ENCODE measurements at regions of chr14 and their contacts with region 1.

Region 1: GRCh38 chr14:57486767-57487379 is 6.8 kb downstream of the CCDC198 start:
- DNase-seq: no peak
- H3K4me3 ChIP-seq: no peak overlapping the region
- H3K27ac ChIP-seq: no peak overlapping the region
- H3K4me1 ChIP-seq: no peaks in the 10 kb centered on the region
- H3K27me3 ChIP-seq: no peaks in the 10 kb centered on the region
- CTCF ChIP-seq: peak; percentile 42 to 57 (median 53)
- POLR2A ChIP-seq: no peak

Region 2: DNA sequence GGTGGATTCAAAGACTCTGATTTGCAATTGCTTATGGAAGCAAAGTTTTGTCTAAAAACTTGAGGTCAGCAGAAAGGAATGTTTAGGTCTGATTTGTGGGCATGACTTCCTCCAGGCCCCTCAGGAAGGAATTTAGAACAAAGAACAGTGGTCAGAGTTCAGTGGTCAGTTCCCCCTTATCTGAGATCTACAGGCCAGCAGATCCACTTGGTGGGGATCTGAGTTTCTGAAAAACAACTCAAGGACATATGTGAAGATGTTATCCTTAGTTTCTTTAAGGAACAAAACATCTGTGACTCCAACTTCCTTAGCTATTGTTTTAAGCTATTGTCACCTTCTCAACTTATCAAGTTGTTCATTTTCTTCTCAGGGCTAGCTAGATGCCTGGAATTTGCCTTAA is 124.5 kb before region 1 on chr14:
- intact Hi-C with region 1: no loop called
- DNase-seq: no peak
- H3K4me3 ChIP-seq: no peak overlapping the region
- H3K27ac ChIP-seq: no peak overlapping the region
- H3K4me1 ChIP-seq: no peaks in the 10 kb centered on the region
- H3K27me3 ChIP-seq: no peaks in the 10 kb centered on the region
- CTCF ChIP-seq: no peak
- POLR2A ChIP-seq: no peak

Region 3: GRCh38 chr14:58072288-58073071 is 585.6 kb after region 1 on chr14:
- intact Hi-C with region 1: loop called (anchors 10 kb)
- DNase-seq: peak; percentile 39 to 49
- H3K4me3 ChIP-seq: no peak overlapping the region
- H3K27ac ChIP-seq: no peak overlapping the region
- H3K4me1 ChIP-seq: no peaks in the 10 kb centered on the region
- H3K27me3 ChIP-seq: no peaks in the 10 kb centered on the region
- CTCF ChIP-seq: peak; percentile 60 to 82 (median 74)
- POLR2A ChIP-seq: no peak

Measured in uterus (tissue), 4 donors.